ENCODE measurements at regions of chr12 and their contacts with region 1.

Region 1: DNA sequence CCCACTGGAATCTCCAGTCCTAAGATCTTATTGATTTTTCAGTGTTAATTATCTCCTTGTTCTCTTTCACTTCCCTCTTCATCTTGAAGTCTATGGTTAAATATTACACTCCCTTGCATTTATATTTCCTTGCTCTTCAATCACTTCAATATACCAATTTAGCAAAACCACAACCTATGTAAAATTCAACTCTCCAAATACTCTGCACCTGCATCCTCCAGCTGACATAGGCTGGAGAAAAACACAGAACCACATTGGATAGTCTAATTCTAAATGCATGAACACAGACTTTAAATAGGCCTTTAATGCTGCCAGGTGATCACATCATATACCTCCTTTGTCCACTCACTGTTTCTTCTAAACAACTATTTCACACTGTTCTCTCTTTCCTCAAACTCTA is 253.8 kb upstream of the GARIN6 start:
- DNase-seq: no peak
- H3K4me3 ChIP-seq: no peak overlapping the region
- H3K27ac ChIP-seq: no peak overlapping the region
- H3K4me1 ChIP-seq: no peaks in the 10 kb centered on the region
- H3K27me3 ChIP-seq: peaks cover 3% of the 10 kb centered on the region
- CTCF ChIP-seq: no peak

Region 2: DNA sequence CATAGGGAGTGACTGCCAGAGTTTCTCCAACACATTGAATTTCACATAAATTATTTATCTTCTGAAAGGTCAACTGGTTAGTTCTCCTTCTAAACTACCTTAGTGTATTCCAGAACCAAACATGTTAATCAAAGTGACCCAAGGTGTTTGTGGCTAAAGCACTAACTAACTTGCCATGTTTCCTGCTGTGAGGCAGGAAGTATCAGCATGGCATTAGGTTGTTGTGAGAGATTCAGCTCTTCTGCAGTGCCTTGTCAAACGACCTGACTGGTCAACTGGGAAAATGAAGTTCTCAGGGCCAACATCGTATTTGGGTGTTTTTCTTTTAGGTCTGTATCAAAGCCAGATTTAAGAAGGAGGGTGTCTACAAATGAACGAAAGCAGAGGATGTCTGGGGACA is 300.6 kb before region 1 on chr12:
- CTCF ChIA-PET with region 1: no interaction called
- POLR2A ChIA-PET with region 1: no interaction called
- intact Hi-C with region 1: no loop called
- DNase-seq: no peak
- H3K4me3 ChIP-seq: no peak overlapping the region
- H3K27ac ChIP-seq: no peak overlapping the region
- H3K4me1 ChIP-seq: no peaks in the 10 kb centered on the region
- H3K27me3 ChIP-seq: peaks cover 15% of the 10 kb centered on the region
- CTCF ChIP-seq: no peak

Region 3: GRCh38 chr12:99413751-99414150 is 20.0 kb after region 1 on chr12:
- CTCF ChIA-PET with region 1: no interaction called
- POLR2A ChIA-PET with region 1: no interaction called
- intact Hi-C with region 1: loop called (anchors 2 kb)
- DNase-seq: no peak
- H3K4me3 ChIP-seq: no peak overlapping the region
- H3K27ac ChIP-seq: no peak overlapping the region
- H3K4me1 ChIP-seq: no peaks in the 10 kb centered on the region
- H3K27me3 ChIP-seq: no peaks in the 10 kb centered on the region
- CTCF ChIP-seq: no peak

Region 4: GRCh38 chr12:99444859-99445316 is 51.1 kb after region 1 on chr12:
- CTCF ChIA-PET with region 1: no interaction called
- POLR2A ChIA-PET with region 1: no interaction called
- intact Hi-C with region 1: no loop called
- DNase-seq: no peak
- H3K4me3 ChIP-seq: no peak overlapping the region
- H3K27ac ChIP-seq: no peak overlapping the region
- H3K4me1 ChIP-seq: no peaks in the 10 kb centered on the region
- H3K27me3 ChIP-seq: no peaks in the 10 kb centered on the region
- CTCF ChIP-seq: no peak

Region 5: DNA sequence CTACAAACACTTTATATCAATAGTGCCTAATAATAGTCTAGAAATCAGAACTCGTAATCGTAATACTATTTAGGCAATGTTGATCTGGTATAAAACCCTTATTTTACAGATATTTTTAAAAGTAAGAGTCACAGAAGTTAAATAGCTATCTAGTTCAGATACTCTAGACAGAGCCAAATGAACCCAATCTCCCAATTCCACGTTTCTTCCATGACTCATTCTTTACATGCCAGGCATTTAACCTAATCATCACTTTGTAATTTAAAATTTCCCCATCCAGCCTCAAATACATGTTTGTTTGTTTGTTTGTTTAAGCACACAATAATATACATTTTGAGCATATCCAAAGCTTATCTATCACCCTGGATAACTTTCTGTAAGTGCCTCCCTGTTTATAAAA is 217.4 kb after region 1 on chr12:
- CTCF ChIA-PET with region 1: no interaction called
- POLR2A ChIA-PET with region 1: no interaction called
- intact Hi-C with region 1: no loop called
- DNase-seq: no peak
- H3K4me3 ChIP-seq: no peak overlapping the region
- H3K27ac ChIP-seq: no peak overlapping the region
- H3K4me1 ChIP-seq: no peaks in the 10 kb centered on the region
- H3K27me3 ChIP-seq: no peaks in the 10 kb centered on the region
- CTCF ChIP-seq: no peak

Measured in A673 (cell line).